Activated CD4-positive, alpha-beta memory T cell treated with anti-CD3 and anti-CD28 coated beads for 36 hours (primary cell): ENCODE measurements at regions of chr2 and their contacts with region 1.

Region 1: GRCh38 chr2:207166039-207166348 is 246 bp upstream of the KLF7 start:
- DNase-seq: peak; percentile 99
- H3K4me3 Mint-ChIP-seq: peak overlapping the region; percentile 95
- H3K27ac Mint-ChIP-seq: peak overlapping the region; percentile 99
- H3K4me1 Mint-ChIP-seq: peaks cover 49% of the 10 kb centered on the region
- H3K27me3 Mint-ChIP-seq: peaks cover 2% of the 10 kb centered on the region

Region 2: GRCh38 chr2:207046724-207047123 is 119.3 kb before region 1 on chr2:
- CTCF ChIA-PET with region 1: interaction called, 3 read pairs
- POLR2A ChIA-PET with region 1: interaction called, 3 read pairs
- intact Hi-C with region 1: loop called (anchors 2 kb)
- DNase-seq: peak; percentile 41
- H3K4me3 Mint-ChIP-seq: no peak overlapping the region
- H3K27ac Mint-ChIP-seq: peak overlapping the region; percentile 1
- H3K4me1 Mint-ChIP-seq: peaks cover 12% of the 10 kb centered on the region
- H3K27me3 Mint-ChIP-seq: no peaks in the 10 kb centered on the region

Region 3: DNA sequence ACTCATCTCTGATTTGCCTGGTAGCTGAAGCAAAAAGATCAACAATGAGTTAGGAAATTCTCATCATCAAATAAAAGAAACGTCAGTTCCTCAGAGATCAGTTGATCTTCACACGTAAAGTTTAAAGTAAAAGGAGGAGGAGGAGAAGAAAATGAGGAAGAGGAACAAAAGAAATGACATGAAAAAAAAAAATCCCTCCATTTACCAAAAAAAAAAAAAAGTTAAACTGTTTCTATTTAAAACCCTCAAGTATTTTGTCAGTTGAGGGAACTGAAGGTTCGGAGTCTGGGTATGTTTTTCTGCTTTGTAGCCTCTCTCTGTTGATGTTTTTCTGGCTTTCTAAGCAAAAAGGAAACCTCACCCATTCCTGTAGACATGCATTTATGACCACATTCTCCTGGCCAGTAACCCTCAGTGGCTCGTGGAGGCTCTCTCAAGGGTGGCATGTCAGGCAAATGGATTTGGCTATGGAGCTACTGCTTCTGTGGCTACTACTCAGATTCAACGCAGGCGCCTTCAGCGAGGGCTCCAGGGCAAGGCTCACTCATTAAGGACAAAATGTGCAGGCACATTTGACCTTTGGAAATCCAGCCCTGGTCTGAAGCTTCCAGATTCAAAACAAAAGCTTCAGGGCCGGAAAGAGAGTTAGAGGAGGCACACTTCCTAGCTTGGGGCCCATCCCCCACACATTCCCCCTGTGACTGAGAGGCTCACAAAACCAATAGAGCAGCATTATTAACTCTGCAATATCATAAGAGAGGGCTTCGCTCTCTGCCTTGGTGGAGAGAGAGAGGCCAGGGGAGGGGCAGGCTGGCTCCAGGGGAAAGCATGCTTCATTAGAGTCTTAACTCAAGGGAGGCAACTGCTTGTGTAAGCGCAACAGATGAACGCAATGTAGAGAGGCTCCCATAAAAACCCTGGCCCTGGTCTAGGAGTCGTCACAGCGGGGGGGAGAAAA is 22.5 kb before region 1 on chr2:
- CTCF ChIA-PET with region 1: interaction called, 6 read pairs
- POLR2A ChIA-PET with region 1: interaction called, 12 read pairs
- intact Hi-C with region 1: loop called (anchors 1 kb)
- DNase-seq: peak; percentile 56
- H3K4me3 Mint-ChIP-seq: peak overlapping the region; percentile 48
- H3K27ac Mint-ChIP-seq: peak overlapping the region; percentile 79
- H3K4me1 Mint-ChIP-seq: peaks cover 71% of the 10 kb centered on the region
- H3K27me3 Mint-ChIP-seq: no peaks in the 10 kb centered on the region

Region 4: GRCh38 chr2:207253666-207254345 is 87.8 kb after region 1 on chr2:
- CTCF ChIA-PET with region 1: no interaction called
- POLR2A ChIA-PET with region 1: interaction called, 3 read pairs
- intact Hi-C with region 1: loop called (anchors 1 kb)
- DNase-seq: no peak
- H3K4me3 Mint-ChIP-seq: no peak overlapping the region
- H3K27ac Mint-ChIP-seq: peak overlapping the region; percentile 9
- H3K4me1 Mint-ChIP-seq: peaks cover 56% of the 10 kb centered on the region
- H3K27me3 Mint-ChIP-seq: peaks cover 7% of the 10 kb centered on the region

Region 5: DNA sequence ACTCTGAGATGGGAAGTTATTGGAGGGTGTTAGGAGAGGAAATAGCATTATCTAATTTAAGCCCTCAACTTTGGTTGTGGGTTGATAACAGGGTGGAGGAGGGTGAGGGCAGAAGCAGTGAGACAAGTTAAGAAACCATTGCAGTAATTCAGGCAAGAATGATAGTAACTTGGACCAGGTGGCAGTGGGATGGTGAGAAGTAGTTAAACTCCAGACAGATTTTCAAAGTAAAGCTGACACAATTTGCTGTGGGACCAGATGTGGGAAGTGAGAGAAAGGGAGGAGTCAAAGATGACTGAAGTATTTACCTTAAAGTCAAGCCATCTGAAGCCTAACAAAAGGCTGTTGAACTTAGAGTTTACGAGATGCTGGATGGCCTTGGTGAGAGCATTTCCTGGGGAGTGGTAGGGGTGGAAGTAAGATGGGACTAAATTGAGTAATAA is 163.0 kb after region 1 on chr2:
- CTCF ChIA-PET with region 1: interaction called, 4 read pairs
- POLR2A ChIA-PET with region 1: interaction called, 10 read pairs
- intact Hi-C with region 1: loop called (anchors 1 kb)
- DNase-seq: peak; percentile 32
- H3K4me3 Mint-ChIP-seq: peak overlapping the region; percentile 66
- H3K27ac Mint-ChIP-seq: peak overlapping the region; percentile 98
- H3K4me1 Mint-ChIP-seq: peaks cover 63% of the 10 kb centered on the region
- H3K27me3 Mint-ChIP-seq: no peaks in the 10 kb centered on the region

Region 6: DNA sequence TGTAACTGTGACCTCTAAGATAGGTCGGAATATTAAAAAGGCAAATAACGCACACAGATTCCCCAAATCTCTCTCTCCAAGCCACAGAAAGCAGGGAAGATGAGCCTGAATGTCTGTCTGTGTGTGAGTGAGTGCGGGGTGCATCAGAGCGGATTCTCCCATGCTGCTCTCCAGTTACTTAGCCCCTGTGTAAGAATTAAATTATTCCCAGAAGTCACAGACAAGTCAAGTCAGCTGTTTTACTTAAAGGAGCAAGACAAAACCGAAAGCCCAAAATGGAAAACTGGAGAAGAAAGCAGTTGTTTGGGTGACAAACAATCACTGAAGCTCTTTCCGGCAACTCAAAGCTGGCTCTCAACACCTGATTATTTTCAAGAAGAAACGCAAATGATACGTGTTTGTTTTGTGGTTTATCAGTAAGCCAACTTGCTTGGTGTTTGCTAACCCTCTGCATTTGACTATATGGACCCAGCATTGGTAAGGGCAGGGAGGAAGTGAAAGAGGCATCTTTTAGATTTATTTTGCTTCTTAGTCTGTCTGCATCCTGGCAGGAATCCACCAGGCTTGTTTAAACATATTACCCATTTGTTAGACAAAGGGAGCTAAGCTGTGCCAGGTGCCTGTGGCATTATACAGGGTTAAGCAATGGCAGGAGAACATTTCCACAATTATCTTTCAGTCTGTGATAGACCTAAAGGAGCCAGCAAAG is 242.2 kb after region 1 on chr2:
- CTCF ChIA-PET with region 1: no interaction called
- POLR2A ChIA-PET with region 1: no interaction called
- intact Hi-C with region 1: no loop called
- DNase-seq: no peak
- H3K4me3 Mint-ChIP-seq: no peak overlapping the region
- H3K27ac Mint-ChIP-seq: no peak overlapping the region
- H3K4me1 Mint-ChIP-seq: peaks cover 6% of the 10 kb centered on the region
- H3K27me3 Mint-ChIP-seq: no peaks in the 10 kb centered on the region

Region 7: DNA sequence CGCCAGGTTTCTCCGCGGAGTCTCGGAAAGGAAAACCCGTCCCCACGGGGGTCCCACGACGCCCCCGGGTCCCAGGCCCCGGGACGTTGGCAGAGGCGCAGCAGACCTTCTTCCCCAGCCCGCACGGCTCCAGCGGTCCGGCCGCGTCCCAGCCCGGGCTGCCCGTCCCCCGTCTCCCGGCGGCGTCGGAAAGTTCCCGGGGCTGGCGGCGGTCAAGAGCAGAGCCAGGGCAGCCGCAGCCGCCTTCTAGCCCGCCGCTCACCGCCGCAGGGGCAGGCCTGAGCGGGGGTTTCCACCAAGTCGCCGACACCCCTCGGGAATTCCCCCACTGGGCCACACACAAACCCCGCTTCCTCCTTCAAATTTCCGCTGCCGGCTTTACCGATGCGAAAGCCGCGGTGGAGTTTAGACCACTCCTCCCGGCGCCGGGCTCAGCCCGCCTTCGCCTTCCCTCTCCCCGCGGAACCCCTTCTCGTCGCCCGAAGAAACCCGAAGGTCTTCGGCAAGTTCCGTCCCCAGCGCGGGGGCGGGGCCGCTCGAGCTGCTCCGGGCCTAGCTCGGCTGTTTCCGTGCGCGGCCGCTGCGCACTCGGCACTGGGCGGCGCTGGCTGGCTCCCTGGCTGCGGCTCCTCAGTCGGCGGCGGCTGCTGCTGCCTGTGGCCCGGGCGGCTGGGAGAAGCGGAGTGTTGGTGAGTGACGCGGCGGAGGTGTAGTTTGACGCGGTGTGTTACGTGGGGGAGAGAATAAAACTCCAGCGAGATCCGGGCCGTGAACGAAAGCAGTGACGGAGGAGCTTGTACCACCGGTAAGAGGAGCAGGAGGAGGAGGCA is 363.6 kb after region 1 on chr2 and contains the start of gene CREB1:
- CTCF ChIA-PET with region 1: no interaction called
- POLR2A ChIA-PET with region 1: interaction called, 4 read pairs
- intact Hi-C with region 1: loop called (anchors 1 kb)
- DNase-seq: peak; percentile 100
- H3K4me3 Mint-ChIP-seq: peak within 1 kb of the TSS; percentile 89
- H3K27ac Mint-ChIP-seq: peak within 1 kb of the TSS; percentile 99
- H3K4me1 Mint-ChIP-seq: peaks cover 50% of the 10 kb centered on the region
- H3K27me3 Mint-ChIP-seq: no peaks in the 10 kb centered on the region
- total RNA-seq, gene CREB1: 90.7 to 92.2 TPM

Region 8: DNA sequence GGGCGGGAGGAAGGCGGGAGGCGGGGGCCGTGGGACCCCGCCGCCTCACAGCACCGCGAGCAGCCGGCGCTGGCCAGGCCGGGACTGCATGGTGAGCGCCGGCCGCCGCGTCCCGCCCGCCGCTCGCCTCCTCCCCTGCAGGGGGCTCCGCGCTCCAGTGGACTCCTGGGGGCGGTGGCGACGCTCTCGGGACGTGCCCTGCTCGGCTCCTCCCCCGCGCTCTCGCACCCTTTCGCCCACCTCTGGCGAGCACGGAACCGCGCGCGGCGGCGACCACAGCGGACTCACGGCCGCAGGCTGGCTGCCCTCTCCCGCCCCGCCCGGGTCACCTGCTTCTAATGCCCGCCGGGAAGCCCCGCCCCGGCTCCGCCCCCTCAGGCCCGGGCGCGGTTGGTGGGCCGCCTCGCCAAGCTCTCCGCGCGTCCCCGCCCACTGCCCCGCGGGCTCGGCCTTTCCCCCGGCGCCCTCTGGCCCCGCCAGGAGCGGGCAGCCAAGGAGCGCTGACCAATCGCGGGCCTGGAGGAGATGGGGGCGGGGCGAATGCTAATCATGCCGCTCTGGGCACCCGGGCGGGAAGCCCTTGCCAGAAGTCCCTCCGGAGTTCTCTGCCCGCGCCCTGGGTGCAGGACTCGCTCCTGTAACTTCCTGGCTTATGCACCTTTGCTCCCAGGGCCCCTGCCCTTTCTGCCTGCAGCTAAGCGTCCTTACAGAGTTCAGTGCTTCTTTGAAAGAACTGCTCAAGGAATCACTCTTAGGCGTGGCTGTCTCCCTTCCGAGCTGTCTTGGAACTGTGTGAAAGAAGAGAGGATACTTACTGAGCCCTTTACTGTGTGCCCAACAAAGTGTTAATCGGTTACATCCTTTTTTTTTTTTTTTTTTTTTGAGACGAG is 603.8 kb after region 1 on chr2 and contains the start of gene FZD5:
- CTCF ChIA-PET with region 1: no interaction called
- POLR2A ChIA-PET with region 1: no interaction called
- intact Hi-C with region 1: loop called (anchors 2 kb)
- DNase-seq: peak; percentile 92
- H3K4me3 Mint-ChIP-seq: peak within 1 kb of the TSS; percentile 78
- H3K27ac Mint-ChIP-seq: no peak within 1 kb of the TSS
- H3K4me1 Mint-ChIP-seq: peaks cover 31% of the 10 kb centered on the region
- H3K27me3 Mint-ChIP-seq: peaks cover 30% of the 10 kb centered on the region
- total RNA-seq, gene FZD5: 1.3 to 1.7 TPM